Activated CD4-positive, alpha-beta T cell treated with anti-CD3 and anti-CD28 coated beads for 36 hours (primary cell): ENCODE measurements at regions of chr3 and their contacts with region 1.

Region 1: GRCh38 chr3:194640829-194641228 is 7.6 kb upstream of the TMEM44 start:
- DNase-seq: peak; percentile 59
- ATAC-seq: peak; percentile 71
- H3K4me3 Mint-ChIP-seq: no peak overlapping the region
- H3K27ac Mint-ChIP-seq: no peak overlapping the region
- H3K4me1 Mint-ChIP-seq: peaks cover 11% of the 10 kb centered on the region
- H3K27me3 Mint-ChIP-seq: no peaks in the 10 kb centered on the region

Region 2: DNA sequence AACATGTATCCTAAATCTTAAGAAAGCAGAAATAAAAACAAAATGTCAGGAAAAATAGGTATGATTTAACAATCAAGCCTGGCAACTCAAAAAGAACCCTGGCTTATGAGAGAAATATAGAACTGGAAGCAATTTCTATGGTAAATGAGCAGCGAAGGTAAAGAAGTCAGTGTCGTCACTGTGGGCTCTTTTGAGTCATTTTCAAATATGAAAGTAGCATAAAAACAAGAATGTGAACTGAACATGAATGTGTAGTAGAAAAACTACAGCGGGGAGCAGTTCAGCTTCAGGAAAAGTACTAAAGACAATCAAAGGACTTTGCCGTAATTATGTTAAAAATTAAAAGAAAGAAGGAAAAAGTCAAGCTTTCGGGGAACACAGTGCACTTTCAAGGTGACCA is 13.6 kb after region 1 on chr3:
- CTCF ChIA-PET with region 1: interaction called, 4 read pairs
- POLR2A ChIA-PET with region 1: interaction called, 7 read pairs
- intact Hi-C with region 1: loop called in 1 of 2 experiments (anchors 1 kb)
- DNase-seq: peak; percentile 32
- ATAC-seq: peak; percentile 89
- H3K4me3 Mint-ChIP-seq: peak overlapping the region; percentile 39
- H3K27ac Mint-ChIP-seq: peak overlapping the region; percentile 90
- H3K4me1 Mint-ChIP-seq: peaks cover 18% of the 10 kb centered on the region
- H3K27me3 Mint-ChIP-seq: no peaks in the 10 kb centered on the region